OCI-LY7 (cell line): ENCODE measurements at regions of chrX and their contacts with region 1.

Region 1: GRCh38 chrX:148517176-148517575 is 16.8 kb downstream of the AFF2 start:
- DNase-seq: no peak
- H3K4me3 ChIP-seq: no peak overlapping the region
- H3K27ac ChIP-seq: peak overlapping the region; percentile 47
- H3K4me1 ChIP-seq: peaks cover 96% of the 10 kb centered on the region
- CTCF ChIP-seq: no peak

Region 2: DNA sequence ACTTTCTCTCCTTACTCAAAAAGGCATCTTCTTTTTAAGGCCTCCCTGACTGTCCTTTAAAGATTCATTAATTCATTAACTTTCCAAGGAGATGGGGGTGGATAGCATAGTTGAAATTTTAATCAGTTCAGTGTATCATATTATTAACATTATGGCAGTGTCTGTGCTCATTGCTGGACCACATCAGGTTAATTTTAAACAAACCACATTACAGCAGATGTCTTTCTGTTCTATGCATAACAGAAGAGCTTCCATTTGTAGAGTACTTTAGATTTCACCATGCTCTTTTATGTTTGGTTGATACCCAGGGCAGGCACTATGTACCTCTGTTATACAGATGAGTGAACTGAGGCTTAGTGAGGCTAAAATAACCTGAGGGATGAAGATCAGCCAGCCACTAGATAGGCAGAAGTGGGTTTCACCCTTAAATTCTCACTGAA is 24.4 kb after region 1 on chrX:
- CTCF ChIA-PET with region 1: interaction called, 3 read pairs
- POLR2A ChIA-PET with region 1: interaction called, 163 read pairs
- intact Hi-C with region 1: loop called (anchors 1 kb)
- DNase-seq: peak; percentile 58
- H3K4me3 ChIP-seq: peak overlapping the region; percentile 56
- H3K27ac ChIP-seq: peak overlapping the region; percentile 96
- H3K4me1 ChIP-seq: peaks cover 97% of the 10 kb centered on the region
- CTCF ChIP-seq: no peak